ENCODE measurements at regions of chr1 and their contacts with region 1.

Region 1: GRCh38 chr1:234599617-234600417 is 10.2 kb downstream of the IRF2BP2 start:
- DNase-seq: peak; percentile 69 to 89
- H3K4me3 ChIP-seq: peak overlapping the region; percentile 62
- H3K27ac ChIP-seq: peak overlapping the region; percentile 99
- H3K4me1 ChIP-seq: peaks cover 61% of the 10 kb centered on the region
- H3K27me3 ChIP-seq: no peaks in the 10 kb centered on the region
- CTCF ChIP-seq: no peak; the same call in 1 of the 2 replicates

Region 2: GRCh38 chr1:234515821-234516241 is 84.0 kb before region 1 on chr1:
- CTCF ChIA-PET with region 1: no interaction called
- POLR2A ChIA-PET with region 1: interaction called, 11 read pairs
- intact Hi-C with region 1: no loop called
- DNase-seq: peak in 1 of 2 experiments; percentile 81
- H3K4me3 ChIP-seq: peak overlapping the region; percentile 3; the same call in 1 of the 2 replicates
- H3K27ac ChIP-seq: peak overlapping the region; percentile 82
- H3K4me1 ChIP-seq: peaks cover 37% of the 10 kb centered on the region
- H3K27me3 ChIP-seq: no peaks in the 10 kb centered on the region
- CTCF ChIP-seq: no peak

Region 3: GRCh38 chr1:234553156-234553863 is 46.5 kb before region 1 on chr1:
- CTCF ChIA-PET with region 1: no interaction called
- POLR2A ChIA-PET with region 1: no interaction called
- intact Hi-C with region 1: no loop called
- DNase-seq: no peak
- H3K4me3 ChIP-seq: no peak overlapping the region
- H3K27ac ChIP-seq: no peak overlapping the region
- H3K4me1 ChIP-seq: no peaks in the 10 kb centered on the region
- H3K27me3 ChIP-seq: no peaks in the 10 kb centered on the region
- CTCF ChIP-seq: no peak

Region 4: DNA sequence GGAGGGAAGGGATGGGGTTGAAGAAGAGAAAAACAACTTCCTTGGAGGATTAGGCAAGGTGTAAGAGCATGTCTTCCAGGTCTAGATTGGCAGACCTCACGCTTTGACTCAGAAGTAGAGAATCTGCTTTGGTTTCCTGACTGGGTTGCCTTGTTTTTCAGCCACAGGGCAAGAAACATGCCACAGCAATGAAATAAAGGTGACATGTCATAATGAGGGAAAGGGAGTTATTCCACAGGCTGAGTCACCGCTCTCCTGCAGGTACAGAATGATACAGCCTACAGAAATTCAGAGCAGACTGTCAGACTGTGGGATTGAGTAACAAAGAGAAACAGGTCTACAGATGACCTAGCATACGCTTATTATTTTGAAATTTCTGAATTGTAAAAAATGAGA is 35.2 kb before region 1 on chr1:
- CTCF ChIA-PET with region 1: no interaction called
- POLR2A ChIA-PET with region 1: no interaction called
- intact Hi-C with region 1: loop called (anchors 1 kb)
- DNase-seq: peak; percentile 88 to 99
- H3K4me3 ChIP-seq: no peak overlapping the region
- H3K27ac ChIP-seq: peak overlapping the region; percentile 90
- H3K4me1 ChIP-seq: peaks cover 45% of the 10 kb centered on the region
- H3K27me3 ChIP-seq: no peaks in the 10 kb centered on the region
- CTCF ChIP-seq: no peak

Region 5: DNA sequence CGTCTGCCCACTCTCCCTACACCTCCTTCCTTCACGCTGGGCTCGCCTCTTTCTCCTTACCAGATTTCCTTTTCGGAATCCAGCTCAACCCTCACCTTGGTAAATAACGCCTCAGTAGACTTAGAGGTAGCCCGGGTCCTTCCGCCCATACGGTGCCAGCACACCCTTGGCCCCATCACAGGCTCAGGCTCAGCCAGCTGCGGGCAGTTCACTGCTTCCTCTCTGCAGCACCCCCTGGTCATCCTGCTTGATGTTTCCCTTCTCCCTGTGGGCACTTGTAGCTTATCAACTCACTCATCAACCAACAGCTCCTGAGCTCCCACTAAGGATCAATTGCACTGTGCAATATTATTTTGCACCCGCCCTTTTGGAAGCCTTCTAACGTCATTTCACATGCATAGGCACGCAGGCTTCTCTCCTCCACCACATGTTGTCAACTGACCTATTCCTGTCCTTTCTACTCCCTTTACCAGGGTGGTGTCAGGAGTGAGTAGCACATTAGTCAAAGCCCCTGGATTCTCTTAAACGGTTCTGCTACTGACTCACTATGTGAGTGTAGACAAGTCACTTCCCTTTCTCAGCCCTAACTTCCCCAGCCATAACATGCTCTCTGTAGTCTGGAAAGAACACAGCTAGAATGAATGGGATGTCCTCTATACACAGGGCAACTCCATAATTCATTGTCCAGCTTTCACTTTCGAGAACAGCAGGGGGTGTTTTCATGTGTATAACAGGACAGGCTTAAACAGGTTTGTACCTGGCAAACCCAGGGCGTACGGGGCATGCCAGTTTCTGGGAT is 57.2 kb after region 1 on chr1:
- CTCF ChIA-PET with region 1: no interaction called
- POLR2A ChIA-PET with region 1: interaction called, 10 read pairs
- intact Hi-C with region 1: no loop called
- DNase-seq: peak; percentile 50 to 95
- H3K4me3 ChIP-seq: peak overlapping the region; percentile 69
- H3K27ac ChIP-seq: peak overlapping the region; percentile 99
- H3K4me1 ChIP-seq: peaks cover 59% of the 10 kb centered on the region
- H3K27me3 ChIP-seq: no peaks in the 10 kb centered on the region
- CTCF ChIP-seq: no peak

Region 6: DNA sequence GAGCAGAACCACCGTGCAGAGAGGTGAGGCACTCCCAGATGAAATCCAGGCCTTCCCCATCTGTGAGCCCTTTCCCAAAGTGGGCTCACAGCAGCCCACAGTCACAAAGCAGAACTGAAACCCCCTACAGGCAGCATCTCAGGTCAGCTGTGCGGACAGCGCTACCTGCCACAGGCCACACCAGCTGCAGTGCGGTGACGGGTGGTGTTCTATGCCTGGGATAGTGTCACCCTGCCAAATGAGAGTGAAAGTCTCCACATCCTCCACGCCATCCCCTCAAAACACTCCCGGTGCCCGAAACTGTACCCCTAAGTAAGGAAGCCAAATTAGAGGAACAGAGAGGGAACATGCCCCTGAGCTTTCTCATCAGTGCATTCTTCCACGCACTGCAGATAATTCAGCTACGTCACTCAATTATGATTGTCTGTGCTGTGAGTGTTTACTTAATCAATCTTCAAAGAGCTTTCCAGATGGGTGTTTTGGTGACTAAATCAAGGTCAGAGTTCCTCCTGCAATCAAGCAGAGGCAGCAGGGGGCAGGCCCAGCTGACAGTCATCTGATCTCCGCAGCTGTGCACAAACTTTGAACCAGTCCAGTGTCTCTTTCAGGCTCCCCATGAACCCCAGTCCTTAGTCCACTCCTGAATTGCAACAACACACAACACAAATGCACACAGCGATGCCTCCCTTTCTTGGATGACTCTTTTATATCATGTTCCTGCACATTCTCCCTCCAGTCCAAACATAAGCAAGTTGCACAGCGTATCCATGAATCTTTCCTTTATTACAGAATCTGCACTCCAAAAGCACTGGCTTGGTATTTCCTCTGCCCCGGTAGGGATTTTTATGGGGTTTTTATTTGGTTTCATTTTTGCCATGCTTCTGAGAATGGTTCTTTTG is 378.8 kb after region 1 on chr1:
- CTCF ChIA-PET with region 1: interaction called, 3 read pairs
- POLR2A ChIA-PET with region 1: interaction called, 6 read pairs
- intact Hi-C with region 1: loop called (anchors 1 kb)
- DNase-seq: peak; percentile 45 to 93
- H3K4me3 ChIP-seq: peak overlapping the region; percentile 30; the same call in 1 of the 2 replicates
- H3K27ac ChIP-seq: peak overlapping the region; percentile 99
- H3K4me1 ChIP-seq: peaks cover 99% of the 10 kb centered on the region
- H3K27me3 ChIP-seq: no peaks in the 10 kb centered on the region
- CTCF ChIP-seq: no peak